ENCODE measurements at regions of chr10 and their contacts with region 1.

Region 1: GRCh38 chr10:102009801-102010425 is 46.1 kb downstream of the ARMH3 start:
- DNase-seq: peak; percentile 65
- H3K4me3 ChIP-seq: no peak overlapping the region
- H3K27ac ChIP-seq: no peak overlapping the region
- H3K4me1 ChIP-seq: peaks cover 0 to 6% (median 0%) of the 10 kb centered on the region in 4 donors
- H3K27me3 ChIP-seq: no peaks in the 10 kb centered on the region
- CTCF ChIP-seq: peak; percentile 70 to 88 (median 82)
- EP300 ChIP-seq: no peak
- POLR2A ChIP-seq: no peak

Region 2: DNA sequence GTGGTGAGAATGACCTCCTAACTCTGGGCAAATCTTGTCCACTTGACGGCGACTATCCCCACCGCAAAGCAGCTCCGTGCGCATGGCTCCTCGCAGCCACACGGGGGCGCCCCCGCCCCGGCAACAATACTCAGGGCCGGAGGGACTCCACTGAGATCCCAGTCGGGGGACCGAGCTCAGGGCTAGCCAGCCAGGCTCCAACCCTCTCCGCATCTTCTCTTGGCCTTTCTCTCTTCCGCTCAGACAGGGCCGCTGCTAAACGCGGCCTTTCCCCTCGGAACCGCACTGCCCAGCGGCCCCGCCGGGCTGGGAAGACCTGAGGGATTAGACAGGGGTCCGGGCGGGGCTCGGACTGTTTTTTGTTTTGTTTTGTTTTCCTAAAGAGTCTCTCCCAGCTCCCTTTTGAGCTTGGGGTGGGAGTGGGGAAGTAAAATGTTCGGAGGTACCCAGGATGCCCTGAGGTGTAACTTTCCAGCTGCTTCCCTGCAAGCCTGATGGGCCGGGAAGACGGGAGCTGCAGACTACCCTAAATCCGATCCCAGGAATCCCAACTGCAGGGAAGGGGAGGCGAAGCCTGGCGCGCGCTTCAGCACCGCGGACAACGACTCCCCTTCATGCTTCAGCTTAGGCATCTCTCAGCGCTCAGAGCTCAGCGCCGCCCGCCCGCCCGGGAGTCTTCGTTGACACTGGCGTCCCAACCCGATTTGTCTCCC is 169.0 kb before region 1 on chr10:
- intact Hi-C with region 1: loop called (anchors 5 kb)
- DNase-seq: peak; percentile 80
- H3K4me3 ChIP-seq: peak overlapping the region in 3 of 4 donors; percentile 26 to 37 (median 37)
- H3K27ac ChIP-seq: no peak overlapping the region
- H3K4me1 ChIP-seq: peaks cover 0 to 38% (median 34%) of the 10 kb centered on the region in 4 donors
- H3K27me3 ChIP-seq: peaks cover 0 to 5% (median 0%) of the 10 kb centered on the region in 3 donors
- CTCF ChIP-seq: peak; percentile 21 to 81 (median 49)
- EP300 ChIP-seq: no peak
- POLR2A ChIP-seq: no peak

Region 3: DNA sequence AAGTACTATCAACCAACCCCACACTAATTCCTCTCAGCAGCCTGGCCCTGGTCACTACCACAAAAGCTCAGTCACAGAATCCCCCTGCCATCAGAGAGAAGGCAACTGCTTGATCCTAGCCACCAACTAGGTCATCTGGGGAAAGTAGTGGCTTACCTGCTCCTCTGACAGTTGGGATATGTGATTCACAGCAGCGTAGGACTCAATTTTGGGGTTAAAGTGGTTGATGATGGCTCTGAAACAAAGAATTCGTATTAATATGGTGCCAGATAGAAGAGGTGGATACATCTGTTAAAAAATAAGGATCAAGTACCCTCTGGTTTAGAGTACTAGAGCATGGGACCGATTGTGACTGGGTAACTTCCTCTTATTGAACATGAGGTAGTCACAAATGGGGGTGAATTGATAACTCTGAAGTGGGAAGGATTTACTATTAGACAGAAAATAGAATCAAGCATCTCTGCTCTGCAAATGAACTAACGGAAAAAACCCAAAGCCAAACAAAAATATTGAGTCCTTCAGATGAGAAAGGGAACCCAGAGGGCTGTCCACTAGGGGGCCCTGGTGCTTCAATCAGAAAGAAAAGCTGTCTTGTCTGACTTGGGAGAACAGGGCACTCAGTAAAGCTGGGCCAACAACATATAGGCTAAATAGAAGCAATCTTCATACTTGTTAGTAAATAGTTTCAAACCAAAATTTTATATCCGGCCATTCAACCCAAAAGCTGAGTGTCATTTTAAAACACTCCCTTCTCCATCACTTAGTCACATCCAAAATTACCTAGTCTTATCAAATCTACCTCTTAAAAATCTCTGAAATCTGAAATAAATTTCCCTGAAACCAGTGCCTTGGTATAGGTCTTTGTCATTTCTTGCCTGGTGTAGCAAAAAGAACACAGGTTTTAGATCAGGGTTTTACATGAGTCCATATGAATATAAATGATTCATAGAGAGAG is 120.4 kb before region 1 on chr10:
- intact Hi-C with region 1: loop called (anchors 5 kb)
- DNase-seq: peak; percentile 66
- H3K4me3 ChIP-seq: no peak overlapping the region
- H3K27ac ChIP-seq: no peak overlapping the region
- H3K4me1 ChIP-seq: no peaks in the 10 kb centered on the region
- H3K27me3 ChIP-seq: no peaks in the 10 kb centered on the region
- CTCF ChIP-seq: peak; percentile 22 to 69 (median 60)
- EP300 ChIP-seq: no peak
- POLR2A ChIP-seq: no peak

Region 4: GRCh38 chr10:101938316-101939281 is 71.3 kb before region 1 on chr10:
- intact Hi-C with region 1: no loop called
- DNase-seq: no peak
- H3K4me3 ChIP-seq: no peak overlapping the region
- H3K27ac ChIP-seq: peak overlapping the region; percentile 48 to 73 (median 65)
- H3K4me1 ChIP-seq: peaks cover 0 to 84% (median 61%) of the 10 kb centered on the region in 4 donors
- H3K27me3 ChIP-seq: no peaks in the 10 kb centered on the region
- CTCF ChIP-seq: no peak
- EP300 ChIP-seq: no peak
- POLR2A ChIP-seq: no peak

Region 5: DNA sequence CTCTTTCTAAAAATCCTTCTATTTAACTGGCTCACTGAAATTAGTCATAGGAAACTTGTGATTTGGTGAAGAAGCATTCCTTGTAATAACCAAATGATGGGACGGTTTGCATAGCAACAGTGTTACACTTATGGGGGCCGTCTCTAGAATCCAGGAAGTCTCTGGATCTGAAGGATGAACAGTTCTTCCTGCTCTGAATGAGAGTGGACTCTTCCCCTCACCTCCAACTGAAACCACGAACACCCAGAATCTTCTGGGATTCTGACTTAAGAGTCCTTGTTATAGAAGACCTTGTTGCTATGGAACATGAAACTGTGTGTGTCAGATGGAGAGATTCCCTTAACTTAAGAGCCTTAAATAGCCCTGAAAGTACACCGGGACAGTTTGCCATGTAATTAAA is 165.5 kb after region 1 on chr10:
- intact Hi-C with region 1: no loop called
- DNase-seq: no peak
- H3K4me3 ChIP-seq: no peak overlapping the region
- H3K27ac ChIP-seq: no peak overlapping the region
- H3K4me1 ChIP-seq: no peaks in the 10 kb centered on the region
- H3K27me3 ChIP-seq: peaks cover 0 to 13% (median 0%) of the 10 kb centered on the region in 3 donors
- CTCF ChIP-seq: no peak
- EP300 ChIP-seq: no peak
- POLR2A ChIP-seq: no peak